ENCODE measurements at regions of chr17 and their contacts with region 1.

Region 1: DNA sequence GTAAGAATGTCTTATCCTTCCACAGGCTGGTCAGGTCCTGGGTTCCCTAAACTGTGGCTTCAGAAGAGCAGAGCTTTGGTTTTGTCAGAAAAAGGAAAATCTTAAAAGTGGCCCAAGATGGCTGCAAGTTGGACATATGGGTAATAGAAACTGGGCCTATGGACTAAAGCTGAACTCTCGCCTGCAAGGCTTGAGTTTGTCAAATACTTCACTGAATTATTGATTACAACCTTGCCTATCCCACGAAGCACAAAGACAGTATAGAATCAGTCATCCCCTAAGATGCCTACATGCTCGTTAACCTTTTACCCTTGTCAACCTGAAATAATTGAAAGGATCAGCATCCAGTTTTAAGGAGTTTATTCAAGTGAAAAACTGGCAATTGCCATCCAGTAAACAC is 20.7 kb downstream of the RNF112 start:
- DNase-seq: no peak
- H3K4me3 ChIP-seq: no peak overlapping the region
- H3K27ac ChIP-seq: no peak overlapping the region
- H3K4me1 ChIP-seq: no peaks in the 10 kb centered on the region
- H3K27me3 ChIP-seq: no peaks in the 10 kb centered on the region
- CTCF ChIP-seq: no peak

Region 2: GRCh38 chr17:19411631-19412030 is 20.1 kb before region 1 on chr17:
- intact Hi-C with region 1: loop called (anchors 2 kb)
- DNase-seq: no peak
- H3K4me3 ChIP-seq: peak overlapping the region; percentile 35 to 41
- H3K27ac ChIP-seq: peak overlapping the region; percentile 31 to 40
- H3K4me1 ChIP-seq: peaks cover 0 to 18% (median 8%) of the 10 kb centered on the region in 4 donors
- H3K27me3 ChIP-seq: no peaks in the 10 kb centered on the region
- CTCF ChIP-seq: no peak

Measured in tibial artery (tissue), 4 donors.